RWPE1 (cell line): ENCODE measurements at regions of chr1 and their contacts with region 1.

Region 1: DNA sequence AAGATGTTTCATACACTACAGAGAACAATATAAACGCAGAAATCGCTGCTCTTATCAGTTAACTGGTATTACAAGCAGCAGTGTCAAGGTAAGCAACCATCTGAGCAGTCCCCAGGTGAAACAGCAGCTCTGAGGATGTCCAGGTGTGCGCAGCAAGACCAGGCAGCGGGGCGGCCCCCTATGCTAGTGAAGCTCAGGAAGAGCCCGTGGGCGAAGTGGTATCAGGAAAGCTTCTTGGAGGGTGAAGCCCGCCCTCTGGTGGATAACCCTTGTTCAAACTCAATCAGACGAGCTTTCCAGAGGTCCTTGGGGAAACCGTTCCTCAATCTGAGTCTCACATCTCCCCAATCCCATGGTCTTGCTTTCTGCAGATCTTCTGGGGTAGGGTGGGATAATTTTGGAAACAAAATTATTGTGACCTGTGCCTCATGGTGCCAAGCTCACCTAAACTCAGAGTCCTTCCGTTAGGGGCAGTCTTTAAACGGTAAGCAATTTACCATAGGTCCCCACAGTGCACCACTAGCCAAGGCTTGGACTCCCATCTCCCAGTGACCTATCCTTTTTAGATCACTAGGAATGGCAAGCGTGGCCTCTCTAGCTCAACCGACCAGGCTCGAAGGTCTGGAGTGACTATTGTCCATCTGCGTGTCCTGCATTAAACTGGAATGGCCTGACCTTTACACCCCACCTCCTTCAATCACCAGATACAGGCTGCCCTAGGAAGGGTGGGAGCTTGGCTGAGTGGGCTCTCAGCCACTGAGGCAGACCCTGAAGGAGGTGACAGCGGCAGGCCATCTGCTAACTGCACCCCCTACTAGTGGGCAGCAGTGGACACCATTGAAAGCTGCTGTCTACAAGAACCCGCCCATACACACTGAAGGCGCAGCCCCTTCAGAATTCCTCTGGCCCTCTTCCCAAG is 13.6 kb upstream of the FAM110D start:
- DNase-seq: peak; percentile 80
- H3K27ac ChIP-seq: no peak overlapping the region
- CTCF ChIP-seq: peak; percentile 76

Region 2: DNA sequence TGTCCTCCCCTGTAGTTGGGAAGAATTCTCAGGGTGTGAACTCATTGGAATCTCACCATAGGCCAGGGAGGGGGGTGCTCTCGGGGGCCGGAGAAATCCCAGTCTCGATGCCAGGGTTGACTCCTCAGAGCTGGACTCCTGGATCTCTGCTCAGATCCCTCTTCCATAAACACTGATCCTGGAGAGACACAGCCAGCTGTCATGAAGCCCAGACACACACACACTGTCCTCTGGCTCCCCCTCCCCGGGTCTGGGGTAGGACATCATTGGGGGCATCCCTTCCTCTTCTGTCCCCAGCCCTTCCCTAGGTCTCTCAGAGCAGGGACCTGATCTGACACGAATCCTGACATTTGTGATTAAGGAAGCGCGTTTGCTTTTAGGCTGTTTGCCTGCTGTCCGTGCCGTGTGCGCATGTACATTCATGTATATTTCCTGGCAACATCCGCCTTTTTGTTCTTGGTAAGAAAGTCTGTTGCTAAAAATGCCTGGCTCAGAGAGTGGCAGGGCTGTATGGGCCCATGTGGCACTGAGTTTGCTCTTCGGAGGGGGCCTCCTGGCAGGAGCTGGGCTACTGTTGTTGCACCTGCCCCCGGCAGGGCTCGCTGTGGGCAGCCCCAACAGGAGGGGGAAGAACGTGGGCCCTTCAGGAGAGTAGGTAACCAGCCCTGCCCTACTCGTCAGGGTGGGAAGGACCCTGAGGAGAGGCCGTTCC is 390.7 kb before region 1 on chr1:
- CTCF ChIA-PET with region 1: no interaction called
- POLR2A ChIA-PET with region 1: no interaction called
- DNase-seq: no peak
- H3K27ac ChIP-seq: no peak overlapping the region
- CTCF ChIP-seq: no peak

Region 3: DNA sequence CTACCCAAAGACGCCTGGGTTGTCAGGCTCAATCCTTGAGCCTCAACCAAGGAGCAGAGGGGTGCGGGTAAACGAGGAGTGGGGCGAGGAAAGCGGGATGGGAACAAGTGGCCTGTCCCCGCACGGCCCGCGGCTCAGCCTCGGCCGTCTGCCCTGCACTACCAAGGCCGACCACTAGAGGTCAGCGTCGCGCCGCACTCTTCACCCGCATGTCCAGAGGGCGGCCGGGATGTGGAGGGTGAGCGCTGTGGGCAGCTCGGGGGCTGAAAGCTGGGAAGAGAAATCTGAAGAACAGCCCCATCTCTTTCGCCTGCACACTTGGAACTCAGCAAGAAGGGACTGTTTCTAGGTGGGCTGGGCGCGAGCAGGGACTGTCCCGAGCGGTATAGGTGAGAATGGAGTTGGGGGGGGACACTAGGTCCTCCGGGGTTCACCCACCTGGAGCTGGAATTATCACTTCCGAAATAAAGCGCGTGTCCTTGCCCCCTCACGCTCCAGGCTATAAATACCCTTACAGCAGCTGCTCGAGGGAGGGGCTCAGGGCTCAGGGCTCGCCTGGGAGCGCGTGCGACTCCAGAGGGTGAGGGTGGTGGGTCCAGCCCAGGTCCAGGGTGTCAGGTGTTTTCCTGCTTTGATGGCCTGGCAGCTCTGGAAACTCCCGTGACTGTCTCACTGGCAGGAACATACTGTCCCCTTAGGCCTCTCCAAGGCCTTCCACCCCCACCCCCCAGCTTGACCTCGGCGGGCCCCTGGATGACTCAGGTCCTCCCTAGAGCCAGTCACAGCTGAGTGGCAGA is 109.1 kb before region 1 on chr1:
- CTCF ChIA-PET with region 1: interaction called, 16 read pairs
- POLR2A ChIA-PET with region 1: interaction called, 3 read pairs
- DNase-seq: peak; percentile 82
- H3K27ac ChIP-seq: peak overlapping the region; percentile 74
- CTCF ChIP-seq: peak; percentile 97

Region 4: GRCh38 chr1:26102526-26102925 is 42.8 kb before region 1 on chr1:
- CTCF ChIA-PET with region 1: interaction called, 41 read pairs
- POLR2A ChIA-PET with region 1: no interaction called
- DNase-seq: no peak
- H3K27ac ChIP-seq: no peak overlapping the region
- CTCF ChIP-seq: no peak

Region 5: DNA sequence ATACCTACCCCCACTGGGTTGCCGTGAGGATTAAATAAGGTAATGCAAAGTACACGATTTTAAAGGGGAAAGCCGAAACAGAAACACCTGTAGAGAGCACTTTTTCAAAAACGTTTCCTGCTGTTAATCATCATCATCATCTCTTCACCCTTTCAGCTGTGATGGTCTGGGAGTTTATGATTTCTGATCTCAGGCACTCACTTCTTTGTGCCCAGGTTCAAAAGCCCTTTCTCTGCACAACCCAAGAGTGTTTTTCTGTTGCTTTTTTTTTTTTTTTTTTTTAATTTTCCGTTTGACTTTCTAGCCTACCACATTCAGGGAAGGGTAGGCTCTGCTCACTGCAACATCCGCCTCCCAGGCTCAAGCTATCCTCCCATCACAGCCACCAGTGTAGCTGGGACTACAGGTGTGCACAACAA is 162.1 kb after region 1 on chr1:
- CTCF ChIA-PET with region 1: no interaction called
- POLR2A ChIA-PET with region 1: no interaction called
- DNase-seq: no peak
- H3K27ac ChIP-seq: peak overlapping the region; percentile 42
- CTCF ChIP-seq: no peak